GM12878 (cell line): ENCODE measurements at regions of chr12 and their contacts with region 1.

Region 1: DNA sequence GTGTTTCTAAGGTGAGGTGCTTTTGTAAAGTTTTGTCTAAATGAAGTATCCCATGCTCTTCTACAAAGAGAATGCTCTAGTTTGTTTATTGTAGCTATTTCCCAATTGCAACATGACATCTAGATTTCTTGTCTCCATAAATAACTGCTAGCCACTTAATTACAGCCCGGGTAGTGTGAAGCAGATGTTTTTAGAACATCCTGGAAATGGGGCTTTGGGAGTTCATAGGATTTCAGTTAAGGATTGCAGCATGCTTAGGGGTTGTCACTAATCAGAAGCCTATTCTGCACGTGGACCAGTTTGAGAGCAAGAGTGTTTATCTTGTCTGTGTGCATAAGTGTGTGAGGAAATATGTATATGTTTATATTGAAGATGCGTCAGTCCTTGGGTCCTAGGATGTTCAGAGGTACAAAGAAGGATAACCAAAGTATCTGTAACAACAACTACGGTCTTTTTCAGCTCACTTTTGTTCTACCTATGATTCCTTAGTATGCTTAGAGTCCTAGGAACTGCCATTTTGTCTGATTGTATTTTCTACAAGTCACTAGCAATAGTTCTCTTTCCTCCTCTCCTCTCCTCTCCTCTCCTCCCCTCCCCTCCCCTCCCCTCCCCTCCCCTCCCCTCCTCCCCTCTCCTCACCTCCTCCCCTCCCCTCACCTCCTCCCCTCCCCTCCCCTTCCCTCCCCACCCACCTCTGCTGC is 135.3 kb downstream of the ACSS3 start:
- DNase-seq: no peak
- ATAC-seq: no peak
- H3K4me3 ChIP-seq: no peak overlapping the region
- H3K27ac ChIP-seq: no peak overlapping the region
- H3K4me1 ChIP-seq: no peaks in the 10 kb centered on the region
- H3K27me3 ChIP-seq: no peaks in the 10 kb centered on the region
- CTCF ChIP-seq: no peak
- EP300 ChIP-seq: no peak
- POLR2A ChIP-seq: no peak
- RAD21 ChIP-seq: no peak

Region 2: GRCh38 chr12:81150382-81150781 is 62.8 kb before region 1 on chr12:
- CTCF ChIA-PET with region 1: no interaction called
- POLR2A ChIA-PET with region 1: no interaction called
- RAD21 ChIA-PET with region 1: no interaction called
- SMC1A ChIA-PET with region 1: no interaction called
- in situ Hi-C with region 1: no loop called
- intact Hi-C with region 1: no loop called
- DNase-seq: no peak
- ATAC-seq: no peak
- H3K4me3 ChIP-seq: no peak overlapping the region
- H3K27ac ChIP-seq: no peak overlapping the region
- H3K4me1 ChIP-seq: no peaks in the 10 kb centered on the region
- H3K27me3 ChIP-seq: no peaks in the 10 kb centered on the region
- CTCF ChIP-seq: no peak
- EP300 ChIP-seq: no peak
- POLR2A ChIP-seq: no peak
- RAD21 ChIP-seq: no peak

Region 3: GRCh38 chr12:81558031-81558430 is 344.9 kb after region 1 on chr12:
- CTCF ChIA-PET with region 1: no interaction called
- POLR2A ChIA-PET with region 1: no interaction called
- RAD21 ChIA-PET with region 1: no interaction called
- SMC1A ChIA-PET with region 1: no interaction called
- in situ Hi-C with region 1: no loop called
- intact Hi-C with region 1: loop called (anchors 5 kb)
- DNase-seq: no peak
- ATAC-seq: no peak
- H3K4me3 ChIP-seq: no peak overlapping the region
- H3K27ac ChIP-seq: no peak overlapping the region
- H3K4me1 ChIP-seq: no peaks in the 10 kb centered on the region
- H3K27me3 ChIP-seq: no peaks in the 10 kb centered on the region
- CTCF ChIP-seq: no peak
- EP300 ChIP-seq: no peak
- POLR2A ChIP-seq: no peak
- RAD21 ChIP-seq: no peak

Region 4: GRCh38 chr12:81835783-81836182 is 622.6 kb after region 1 on chr12:
- CTCF ChIA-PET with region 1: no interaction called
- POLR2A ChIA-PET with region 1: no interaction called
- RAD21 ChIA-PET with region 1: no interaction called
- SMC1A ChIA-PET with region 1: no interaction called
- in situ Hi-C with region 1: no loop called
- intact Hi-C with region 1: no loop called
- DNase-seq: no peak
- ATAC-seq: no peak; the same call in 2 of the 3 replicates
- H3K4me3 ChIP-seq: no peak overlapping the region
- H3K27ac ChIP-seq: no peak overlapping the region
- H3K4me1 ChIP-seq: no peaks in the 10 kb centered on the region
- H3K27me3 ChIP-seq: no peaks in the 10 kb centered on the region
- CTCF ChIP-seq: no peak
- EP300 ChIP-seq: no peak
- POLR2A ChIP-seq: no peak
- RAD21 ChIP-seq: no peak